Activated naive CD4-positive, alpha-beta T cell treated with anti-CD3 and anti-CD28 coated beads, Interleukin-2, amount 10 ng/mL, durations not matched to agents 7 days and 5 days (primary cell): ENCODE measurements at regions of chr20 and their contacts with region 1.

Region 1: DNA sequence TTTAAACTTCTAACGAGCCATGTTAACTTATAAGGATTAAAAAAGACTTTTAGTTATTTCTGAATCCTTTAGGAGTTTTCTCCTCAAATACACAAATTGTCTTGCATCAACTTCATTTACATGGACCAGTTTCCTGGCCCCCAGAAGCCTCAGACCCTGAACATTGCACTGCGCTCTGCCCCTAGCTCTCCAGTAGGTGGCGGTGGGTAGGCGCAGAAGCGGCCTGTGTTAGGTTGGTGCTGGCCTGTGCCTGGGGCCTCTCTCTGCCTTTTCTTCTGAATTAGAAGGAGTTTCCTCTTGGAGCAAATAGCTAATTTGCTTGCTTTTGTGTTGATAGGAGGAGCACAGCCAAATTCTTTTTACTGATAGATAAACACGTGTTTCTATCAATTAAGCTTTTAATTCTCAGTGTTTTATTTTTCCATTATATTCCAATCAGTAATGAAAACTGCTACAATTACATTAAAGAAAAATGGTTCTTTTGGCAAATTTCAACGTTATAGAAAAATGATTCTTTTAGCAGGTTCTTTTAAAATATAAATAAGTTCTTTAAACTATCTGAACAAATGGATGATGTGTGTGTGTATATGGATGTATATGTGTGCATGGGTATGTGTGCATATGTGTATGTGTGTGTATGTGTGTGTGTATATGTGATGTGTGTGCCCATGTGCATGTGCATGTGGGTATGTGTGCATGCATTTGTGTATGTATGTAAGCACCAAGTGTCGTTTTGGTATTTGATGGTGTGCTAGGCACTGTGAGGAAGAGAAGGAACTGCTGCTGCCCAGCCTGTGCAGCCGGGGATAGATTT is 44.5 kb downstream of the DTD1 start:
- DNase-seq: peak; percentile 66
- H3K4me3 Mint-ChIP-seq: no peak overlapping the region
- H3K27ac Mint-ChIP-seq: no peak overlapping the region
- H3K4me1 Mint-ChIP-seq: no peaks in the 10 kb centered on the region
- H3K27me3 Mint-ChIP-seq: no peaks in the 10 kb centered on the region

Region 2: GRCh38 chr20:18778690-18779392 is 146.4 kb after region 1 on chr20:
- CTCF ChIA-PET with region 1: no interaction called
- DNase-seq: no peak
- H3K4me3 Mint-ChIP-seq: no peak overlapping the region
- H3K27ac Mint-ChIP-seq: no peak overlapping the region
- H3K4me1 Mint-ChIP-seq: no peaks in the 10 kb centered on the region
- H3K27me3 Mint-ChIP-seq: peaks cover 22% of the 10 kb centered on the region

Region 3: DNA sequence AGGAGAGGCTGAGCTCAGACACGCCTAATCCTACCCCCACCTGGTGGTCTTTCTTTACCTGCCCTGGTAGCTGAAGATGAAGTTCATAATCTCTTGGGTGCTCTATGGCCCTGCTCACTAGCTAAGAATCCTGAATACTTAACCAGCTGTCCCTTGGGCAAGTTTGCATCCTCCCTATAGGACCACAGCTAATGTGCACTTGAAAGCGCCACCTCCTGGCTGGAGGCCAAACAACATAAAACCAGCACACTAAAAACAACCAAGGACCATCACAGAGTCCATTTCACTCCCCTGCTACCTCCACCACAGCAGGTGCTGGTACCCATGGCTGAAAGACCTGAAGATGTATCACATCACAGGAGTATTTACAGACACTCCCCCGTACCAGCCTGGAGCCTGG is 424.5 kb after region 1 on chr20:
- CTCF ChIA-PET with region 1: interaction called, 20 read pairs
- DNase-seq: no peak
- H3K4me3 Mint-ChIP-seq: no peak overlapping the region
- H3K27ac Mint-ChIP-seq: no peak overlapping the region
- H3K4me1 Mint-ChIP-seq: no peaks in the 10 kb centered on the region
- H3K27me3 Mint-ChIP-seq: no peaks in the 10 kb centered on the region